ENCODE measurements at regions of chr11 and their contacts with region 1.

Region 1: GRCh38 chr11:63738720-63739360 is 29.7 kb downstream of the ZFTA start:
- DNase-seq: peak; percentile 80
- ATAC-seq: peak; percentile 73

Region 2: DNA sequence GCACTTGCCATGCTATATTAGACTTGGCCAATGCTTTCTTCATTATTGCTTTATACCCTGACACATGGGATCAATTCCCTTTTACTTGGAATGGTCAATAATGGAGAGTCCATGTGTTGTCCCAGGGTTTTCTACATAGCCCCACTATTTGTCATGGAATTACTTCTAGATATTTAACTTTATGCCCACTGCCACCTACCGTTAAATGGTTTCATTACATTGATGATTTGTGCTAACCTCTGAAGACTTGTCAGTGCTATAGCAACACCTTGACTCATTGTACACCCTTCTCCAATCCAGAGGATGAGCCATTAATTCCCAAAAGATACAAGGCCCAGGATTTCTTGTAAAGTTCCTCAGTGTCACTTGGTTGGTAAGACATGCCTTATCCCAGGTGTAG is 464.1 kb before region 1 on chr11:
- intact Hi-C with region 1: no loop called
- DNase-seq: no peak
- ATAC-seq: no peak

Region 3: DNA sequence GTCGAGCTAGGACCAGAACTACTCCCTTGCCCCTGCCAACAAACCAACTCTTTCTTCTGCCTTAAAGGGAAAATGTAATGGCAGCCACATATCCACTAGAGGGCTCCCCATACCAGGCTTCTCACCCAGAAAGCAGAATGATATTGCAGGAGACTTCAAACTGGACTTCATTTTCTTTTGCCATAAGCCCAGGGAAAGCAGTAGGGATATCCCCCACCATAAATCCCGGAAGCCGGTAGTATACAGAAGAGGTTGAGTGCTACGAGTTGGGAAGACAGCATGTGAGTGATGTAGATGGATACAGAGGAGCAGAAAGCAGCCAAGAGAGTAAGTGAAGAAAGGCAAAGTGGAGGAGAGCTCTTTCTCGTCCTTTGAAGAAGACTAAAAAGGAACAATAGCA is 259.9 kb before region 1 on chr11:
- intact Hi-C with region 1: loop called (anchors 5 kb)
- DNase-seq: no peak
- ATAC-seq: peak; percentile 92

Region 4: DNA sequence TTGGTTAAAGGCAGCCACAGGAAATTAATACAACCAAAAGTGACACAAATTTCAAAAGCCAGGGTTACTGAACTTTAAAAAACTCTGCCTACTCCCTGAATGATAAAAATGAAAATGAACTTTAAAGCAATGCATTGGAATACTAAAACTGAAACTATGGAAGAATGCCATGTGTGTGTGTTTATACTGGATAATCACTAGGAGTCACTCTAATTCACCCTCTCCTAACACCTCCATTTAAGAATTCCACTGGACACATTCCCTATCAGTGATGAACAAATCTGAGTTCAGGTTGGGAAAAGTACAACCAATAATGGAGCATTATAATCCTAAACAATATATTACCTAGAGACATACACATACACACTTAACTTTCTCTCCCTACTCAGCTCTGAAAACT is 97.1 kb before region 1 on chr11:
- intact Hi-C with region 1: loop called (anchors 5 kb)
- DNase-seq: no peak
- ATAC-seq: no peak

Measured in Right ventricle myocardium superior (tissue), 1 donor.